ENCODE measurements at regions of chr1 and their contacts with region 1.

Region 1: DNA sequence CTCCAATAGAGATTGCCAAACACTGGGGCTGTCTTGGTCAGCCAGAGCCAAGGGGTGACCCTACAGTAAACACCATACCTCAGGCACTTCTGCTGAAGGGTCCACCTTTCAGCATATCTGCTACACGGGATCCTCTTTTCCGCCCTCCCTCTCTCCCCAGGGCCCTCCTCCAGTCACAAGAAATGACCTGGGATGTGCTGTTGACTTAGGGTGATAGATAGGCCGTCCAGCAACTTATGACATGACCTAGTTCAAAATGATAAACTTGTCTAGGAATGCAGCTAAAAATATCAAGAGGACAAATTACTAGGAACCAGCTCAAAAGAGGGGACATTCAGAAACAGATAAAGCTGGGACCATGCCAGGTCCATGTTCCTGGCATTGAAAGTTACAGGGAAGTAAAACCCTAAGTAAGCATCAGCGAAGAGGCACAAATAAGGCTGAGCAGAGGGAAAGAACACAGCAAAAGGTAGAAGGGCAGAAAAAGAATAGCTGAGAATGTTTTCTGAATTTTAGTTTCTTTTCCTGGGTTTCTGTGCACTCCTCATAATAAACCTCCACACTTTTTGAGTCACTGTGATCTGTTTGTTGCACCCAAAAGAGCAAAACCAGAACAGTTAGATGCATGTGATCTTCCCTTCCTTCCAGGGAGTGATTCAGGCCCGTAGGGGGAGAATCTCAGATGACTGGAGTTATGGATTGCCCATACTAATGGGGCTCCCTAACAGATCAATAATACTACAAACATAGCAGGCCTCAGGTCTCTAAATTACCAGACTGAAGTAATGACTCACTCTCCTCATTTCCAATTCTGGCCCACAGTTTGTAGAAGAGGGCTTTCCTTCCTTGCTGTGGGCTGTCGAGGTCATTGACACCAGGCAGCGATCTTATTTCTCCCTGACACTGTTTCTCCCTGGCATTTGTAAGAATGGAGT is 48.9 kb upstream of the F3 start:
- DNase-seq: peak in 4 of 42 donors; percentile 15 to 48 (median 34)

Region 2: DNA sequence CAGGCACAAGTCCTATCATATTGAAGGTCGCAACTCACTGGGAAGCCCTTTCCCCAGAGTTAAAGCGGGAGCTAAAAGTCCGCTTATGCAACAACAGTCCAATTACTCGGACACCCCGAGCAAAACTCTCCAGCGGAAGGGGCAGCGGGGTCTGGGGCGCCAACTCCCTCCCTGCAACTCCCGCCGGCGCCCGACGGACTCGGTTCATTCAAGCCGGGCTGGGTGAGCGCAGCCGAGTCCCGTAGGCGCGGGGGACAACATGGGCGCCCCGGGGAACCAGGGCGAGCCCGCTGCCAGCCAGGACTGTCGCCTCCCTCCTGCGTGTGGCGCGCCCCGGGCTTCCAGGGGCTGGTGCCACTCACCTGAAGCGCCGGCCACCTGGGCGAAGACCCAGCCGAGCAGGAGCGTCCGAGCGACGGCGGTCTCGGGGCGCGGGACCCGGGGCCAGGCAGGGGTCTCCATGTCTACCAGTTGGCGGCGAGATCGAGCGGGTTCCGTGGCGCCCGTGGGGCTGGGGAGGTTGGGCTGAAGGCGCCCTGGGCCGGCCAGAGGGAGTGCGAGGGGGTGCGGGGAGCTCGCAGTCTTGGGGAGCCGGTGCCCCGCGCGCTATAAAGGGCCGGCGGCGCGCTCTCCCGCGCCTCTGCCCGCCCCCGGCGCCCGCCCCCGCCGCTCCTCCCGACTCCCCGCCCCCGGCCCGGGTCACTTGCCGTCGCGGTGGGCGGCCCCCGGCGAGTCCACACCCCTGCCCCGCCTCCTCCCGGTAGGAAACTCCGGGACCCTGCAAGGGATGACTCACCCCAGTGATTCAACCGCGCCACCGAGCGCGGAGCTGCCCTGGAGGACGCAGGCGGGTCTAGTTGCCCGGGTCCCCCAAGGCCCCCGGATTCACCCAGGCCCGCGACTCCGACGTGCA is 49.0 kb before region 1 on chr1 and contains the start of gene F3:
- intact Hi-C with region 1: loop called (anchors 5 kb)
- DNase-seq: peak; percentile 36 to 94 (median 80)

Measured in head of caudate nucleus (tissue), 42 donors.